Esophagus muscularis mucosa (tissue), 4 donors: ENCODE measurements at regions of chr17 and their contacts with region 1.

Region 1: DNA sequence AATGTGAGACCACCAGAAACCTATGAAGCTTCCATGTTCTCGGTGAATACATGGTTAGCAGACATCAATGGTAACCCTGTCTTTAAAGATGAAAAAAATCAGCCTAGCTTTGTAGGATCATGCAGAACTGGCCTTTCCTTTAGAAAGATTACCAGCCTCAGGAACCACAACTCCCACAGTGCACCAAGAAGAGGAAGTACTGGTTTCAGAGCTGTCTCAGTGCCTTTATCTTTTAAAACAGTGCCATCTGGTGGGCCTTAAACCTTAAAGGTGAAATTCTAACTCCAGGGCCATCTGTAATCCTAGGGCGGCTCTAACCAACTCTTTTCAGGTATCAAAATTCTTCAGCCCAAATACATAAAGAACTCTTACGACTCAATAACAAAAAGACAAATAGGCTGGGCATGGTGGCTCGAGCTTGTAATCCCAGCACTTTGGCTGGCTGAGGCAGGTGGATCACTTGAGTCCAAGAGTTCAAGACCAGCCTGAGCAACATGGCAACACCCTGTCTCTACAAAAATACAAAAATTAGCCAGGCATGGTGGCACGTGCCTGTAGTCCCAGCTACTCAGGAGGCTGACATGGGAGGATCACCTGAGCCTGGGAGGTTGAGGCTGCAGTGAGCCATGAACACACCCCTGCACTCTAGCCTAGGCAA is 5.4 kb downstream of the ATPAF2 start:
- DNase-seq: no peak
- H3K4me3 ChIP-seq: no peak overlapping the region
- H3K27ac ChIP-seq: no peak overlapping the region
- H3K4me1 ChIP-seq: peaks cover 15 to 30% (median 26%) of the 10 kb centered on the region in 4 donors
- H3K27me3 ChIP-seq: no peaks in the 10 kb centered on the region
- CTCF ChIP-seq: peak; percentile 61 to 73 (median 61)
- EP300 ChIP-seq: no peak
- POLR2A ChIP-seq: no peak

Region 2: GRCh38 chr17:17681187-17681848 is 352.3 kb before region 1 on chr17 and contains the start of gene RAI1:
- intact Hi-C with region 1: loop called (anchors 5 kb)
- DNase-seq: no peak
- H3K4me3 ChIP-seq: peak within 1 kb of the TSS; percentile 71 to 86 (median 84)
- H3K27ac ChIP-seq: peak within 1 kb of the TSS; percentile 96 to 99 (median 98)
- H3K4me1 ChIP-seq: peaks cover 29 to 49% (median 38%) of the 10 kb centered on the region in 4 donors
- H3K27me3 ChIP-seq: no peaks in the 10 kb centered on the region
- CTCF ChIP-seq: peak; percentile 77 to 99 (median 94)
- EP300 ChIP-seq: no peak
- POLR2A ChIP-seq: no peak
- total RNA-seq, gene RAI1: 18.7 to 41.3 (median 28.3) TPM

Region 3: GRCh38 chr17:17812211-17813057 is 221.1 kb before region 1 on chr17:
- intact Hi-C with region 1: loop called (anchors 5 kb)
- DNase-seq: peak; percentile 97
- H3K4me3 ChIP-seq: no peak overlapping the region
- H3K27ac ChIP-seq: peak overlapping the region; percentile 35 to 83 (median 52)
- H3K4me1 ChIP-seq: peaks cover 49 to 86% (median 70%) of the 10 kb centered on the region in 4 donors
- H3K27me3 ChIP-seq: no peaks in the 10 kb centered on the region
- CTCF ChIP-seq: peak in 2 of 3 experiments; percentile 99 to 100
- EP300 ChIP-seq: no peak
- POLR2A ChIP-seq: no peak

Region 4: DNA sequence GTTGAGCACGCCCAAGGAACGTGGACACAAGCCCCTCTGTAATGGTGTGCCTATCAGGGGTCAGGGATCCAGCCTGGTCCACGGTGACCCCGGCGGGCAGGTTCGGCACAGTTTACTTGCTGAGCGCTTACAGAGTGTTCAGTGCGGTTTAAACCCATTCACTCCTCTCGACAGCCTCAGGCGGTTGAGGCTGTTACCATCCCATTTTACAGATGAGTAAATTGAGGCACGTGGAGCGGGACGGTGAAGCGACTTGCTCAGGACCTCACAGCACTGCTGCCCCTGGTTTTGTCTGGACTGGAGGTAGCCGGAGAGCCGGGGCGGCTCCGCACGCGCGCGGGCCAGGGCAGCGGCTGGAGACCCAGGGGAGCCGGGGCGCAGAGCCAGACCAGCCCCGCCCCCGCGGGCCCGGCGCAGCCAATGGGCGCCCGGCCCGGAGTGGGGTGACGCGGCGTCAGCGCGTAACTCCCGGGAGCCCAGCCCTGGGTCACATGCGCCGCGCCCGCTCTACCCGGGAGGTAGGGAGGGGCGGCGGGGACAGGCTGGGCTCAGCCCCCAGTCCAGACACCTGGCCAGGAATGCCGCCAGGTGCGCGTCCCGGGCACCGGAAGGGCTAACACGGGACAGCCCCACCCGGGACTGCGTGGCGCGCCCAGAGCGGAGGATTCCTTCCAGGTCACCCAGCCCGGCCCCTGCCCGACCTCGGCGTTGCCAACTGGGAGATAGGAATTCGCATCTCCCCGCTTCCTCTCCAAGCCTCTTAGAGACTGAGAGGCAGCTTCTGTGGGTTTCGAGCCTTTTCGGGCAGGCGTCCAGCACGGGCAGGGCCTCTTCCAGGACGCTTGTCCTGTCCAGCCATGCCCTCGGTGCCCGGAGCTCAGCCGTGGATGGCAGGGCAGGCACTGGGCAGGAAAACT is 193.5 kb before region 1 on chr17:
- intact Hi-C with region 1: no loop called
- DNase-seq: no peak
- H3K4me3 ChIP-seq: peak overlapping the region; percentile 59 to 70 (median 64)
- H3K27ac ChIP-seq: peak overlapping the region; percentile 95 to 100 (median 99)
- H3K4me1 ChIP-seq: peaks cover 59 to 68% (median 66%) of the 10 kb centered on the region in 4 donors
- H3K27me3 ChIP-seq: no peaks in the 10 kb centered on the region
- CTCF ChIP-seq: no peak
- EP300 ChIP-seq: no peak
- POLR2A ChIP-seq: peak; percentile 38

Region 5: DNA sequence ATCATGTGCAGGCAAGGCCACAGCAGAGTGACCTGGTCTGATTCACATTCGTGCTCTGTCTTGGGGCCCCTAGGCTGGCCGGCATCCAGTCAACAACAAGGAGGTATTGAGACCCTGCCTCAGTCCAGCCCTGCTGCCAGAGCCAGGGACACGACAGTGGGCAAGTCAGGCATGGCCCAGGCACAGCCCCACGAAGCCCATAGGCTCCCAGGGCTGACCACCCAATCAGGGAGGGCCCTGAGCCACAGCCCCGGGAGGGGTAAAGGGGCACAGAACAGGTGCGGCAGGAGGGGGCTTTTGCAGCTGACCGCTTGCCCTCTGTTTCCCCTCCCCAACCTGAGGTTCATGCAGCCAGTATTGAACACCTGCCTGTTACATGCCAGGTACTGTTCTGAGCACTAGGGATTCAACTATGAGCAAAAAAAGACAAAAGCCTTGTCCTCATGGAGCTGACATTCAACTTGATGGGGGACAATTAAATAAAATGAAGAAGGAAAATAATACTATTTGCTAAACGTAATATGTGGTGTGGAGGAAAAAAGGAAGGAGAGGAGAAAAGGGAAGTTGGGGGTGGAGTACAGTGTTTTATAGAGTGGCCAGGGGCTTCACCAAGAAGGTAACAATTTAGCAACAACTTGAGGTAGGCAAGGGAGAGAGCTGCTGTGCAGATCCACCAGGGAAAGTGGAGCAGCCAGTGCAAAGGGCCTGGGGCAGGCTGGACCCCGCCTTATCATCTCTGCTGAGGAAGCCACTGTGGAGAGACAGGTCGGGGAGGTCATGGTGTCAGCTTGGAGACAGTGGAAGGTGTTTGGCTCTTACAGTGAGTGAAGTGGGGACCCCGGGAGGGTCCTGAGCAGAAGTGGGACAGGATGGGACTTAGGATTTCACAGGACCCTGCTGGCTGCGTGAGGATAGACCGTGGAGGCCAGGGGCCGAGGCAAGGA is 54.8 kb before region 1 on chr17:
- intact Hi-C with region 1: loop called (anchors 5 kb)
- DNase-seq: no peak
- H3K4me3 ChIP-seq: no peak overlapping the region
- H3K27ac ChIP-seq: no peak overlapping the region
- H3K4me1 ChIP-seq: no peaks in the 10 kb centered on the region
- H3K27me3 ChIP-seq: no peaks in the 10 kb centered on the region
- CTCF ChIP-seq: no peak
- EP300 ChIP-seq: no peak
- POLR2A ChIP-seq: no peak

Region 6: DNA sequence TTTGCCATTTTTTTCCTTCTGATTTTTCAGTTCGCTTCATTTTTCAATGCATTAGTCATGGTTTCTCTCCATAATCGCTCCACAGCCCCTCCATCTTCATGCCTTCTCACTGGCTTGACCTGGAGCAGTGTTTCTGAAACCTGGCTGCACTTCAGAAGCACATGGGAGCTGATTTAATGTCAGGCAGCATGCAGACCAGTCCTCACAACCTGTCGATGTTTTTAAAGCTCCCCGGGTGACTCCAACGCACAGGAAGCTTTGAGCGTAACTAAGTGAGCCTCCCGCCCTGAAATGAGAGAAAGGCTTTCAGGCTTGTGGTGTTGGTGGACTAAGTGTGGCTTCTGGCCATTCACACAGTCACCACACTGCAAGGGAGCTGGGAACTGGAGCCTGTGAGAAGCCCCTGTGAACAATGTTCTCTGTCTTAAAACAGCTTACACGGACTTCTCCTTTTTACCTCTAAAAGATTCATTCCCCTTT is 37.3 kb after region 1 on chr17:
- intact Hi-C with region 1: no loop called
- DNase-seq: no peak
- H3K4me3 ChIP-seq: no peak overlapping the region
- H3K27ac ChIP-seq: no peak overlapping the region
- H3K4me1 ChIP-seq: peaks cover 0 to 10% (median 7%) of the 10 kb centered on the region in 4 donors
- H3K27me3 ChIP-seq: peaks cover 0 to 4% (median 0%) of the 10 kb centered on the region in 4 donors
- CTCF ChIP-seq: no peak
- EP300 ChIP-seq: no peak
- POLR2A ChIP-seq: no peak

Region 7: DNA sequence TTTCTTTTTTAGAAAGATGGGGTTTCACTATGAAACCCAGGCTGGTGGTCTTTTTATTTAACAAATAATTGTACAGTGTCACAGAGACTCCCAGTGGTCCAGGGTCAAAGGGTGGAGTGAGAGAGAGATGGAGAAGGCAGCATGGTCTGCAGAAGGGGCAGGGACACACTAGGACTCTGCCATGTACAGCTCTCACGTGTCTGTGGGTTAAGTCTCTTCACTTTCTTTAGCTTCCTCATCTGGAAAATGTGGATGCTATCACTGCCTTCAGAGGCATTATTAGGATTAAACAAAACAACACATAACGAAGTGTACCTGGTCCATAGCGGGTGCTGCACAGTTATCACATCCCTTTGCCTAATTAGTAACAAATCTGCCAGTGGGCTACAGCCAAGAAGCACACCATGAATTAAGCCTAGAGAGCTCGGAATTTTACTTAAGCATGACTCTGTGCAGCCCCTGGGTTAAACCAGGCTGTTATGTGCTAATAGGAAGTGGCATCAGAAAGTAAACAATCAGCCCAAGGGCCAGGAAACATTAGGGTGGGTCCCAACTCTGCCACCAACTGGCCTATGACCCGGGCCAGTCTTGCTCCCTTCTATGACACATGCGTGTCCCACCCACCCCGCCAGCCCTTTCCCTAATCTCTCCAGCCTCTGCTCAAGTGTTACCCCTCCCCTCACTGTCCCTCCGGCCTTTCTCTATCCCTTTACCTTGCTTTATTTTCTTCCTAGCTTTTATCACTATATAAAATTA is 267.3 kb after region 1 on chr17:
- intact Hi-C with region 1: no loop called
- DNase-seq: no peak
- H3K4me3 ChIP-seq: no peak overlapping the region
- H3K27ac ChIP-seq: no peak overlapping the region
- H3K4me1 ChIP-seq: no peaks in the 10 kb centered on the region
- H3K27me3 ChIP-seq: no peaks in the 10 kb centered on the region
- CTCF ChIP-seq: no peak
- EP300 ChIP-seq: no peak
- POLR2A ChIP-seq: no peak

Region 8: DNA sequence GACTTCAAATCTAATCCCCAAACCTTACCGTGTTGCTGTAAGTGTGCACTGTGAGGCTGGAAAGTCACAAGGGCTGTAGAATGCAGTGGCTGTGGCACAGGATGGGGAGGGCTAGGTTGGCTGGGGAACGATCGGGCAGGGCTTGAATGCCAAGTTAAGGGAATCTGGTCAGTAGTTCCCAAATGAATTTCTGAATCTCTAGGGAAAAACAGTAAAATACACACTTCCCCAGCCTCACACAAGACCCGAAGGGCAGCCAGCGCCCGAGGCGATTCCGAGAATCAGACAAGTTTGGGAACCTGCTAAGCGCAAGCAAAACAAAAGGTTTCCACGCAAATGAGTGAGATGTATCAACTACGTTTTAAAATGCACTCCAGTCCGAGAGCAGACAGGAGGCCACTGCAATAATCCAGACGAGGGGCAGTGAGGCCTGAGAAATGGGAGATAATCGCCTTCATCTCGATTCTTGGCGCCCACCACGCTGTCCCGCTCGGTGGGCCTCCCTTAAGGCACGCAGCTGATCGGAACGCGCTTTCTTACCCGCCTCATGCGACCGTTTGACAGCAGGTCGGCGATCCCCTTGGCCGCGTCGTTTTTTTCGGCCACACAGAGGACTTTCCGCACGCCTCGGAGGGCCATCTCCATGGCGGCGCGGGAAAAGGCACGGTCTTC is 280.6 kb after region 1 on chr17:
- intact Hi-C with region 1: no loop called
- DNase-seq: no peak
- H3K4me3 ChIP-seq: peak overlapping the region; percentile 76 to 86 (median 82)
- H3K27ac ChIP-seq: peak overlapping the region; percentile 86 to 88 (median 88)
- H3K4me1 ChIP-seq: peaks cover 54 to 68% (median 63%) of the 10 kb centered on the region in 4 donors
- H3K27me3 ChIP-seq: no peaks in the 10 kb centered on the region
- CTCF ChIP-seq: no peak
- EP300 ChIP-seq: no peak
- POLR2A ChIP-seq: no peak